ENCODE measurements at regions of chr2 and their contacts with region 1.

Region 1: DNA sequence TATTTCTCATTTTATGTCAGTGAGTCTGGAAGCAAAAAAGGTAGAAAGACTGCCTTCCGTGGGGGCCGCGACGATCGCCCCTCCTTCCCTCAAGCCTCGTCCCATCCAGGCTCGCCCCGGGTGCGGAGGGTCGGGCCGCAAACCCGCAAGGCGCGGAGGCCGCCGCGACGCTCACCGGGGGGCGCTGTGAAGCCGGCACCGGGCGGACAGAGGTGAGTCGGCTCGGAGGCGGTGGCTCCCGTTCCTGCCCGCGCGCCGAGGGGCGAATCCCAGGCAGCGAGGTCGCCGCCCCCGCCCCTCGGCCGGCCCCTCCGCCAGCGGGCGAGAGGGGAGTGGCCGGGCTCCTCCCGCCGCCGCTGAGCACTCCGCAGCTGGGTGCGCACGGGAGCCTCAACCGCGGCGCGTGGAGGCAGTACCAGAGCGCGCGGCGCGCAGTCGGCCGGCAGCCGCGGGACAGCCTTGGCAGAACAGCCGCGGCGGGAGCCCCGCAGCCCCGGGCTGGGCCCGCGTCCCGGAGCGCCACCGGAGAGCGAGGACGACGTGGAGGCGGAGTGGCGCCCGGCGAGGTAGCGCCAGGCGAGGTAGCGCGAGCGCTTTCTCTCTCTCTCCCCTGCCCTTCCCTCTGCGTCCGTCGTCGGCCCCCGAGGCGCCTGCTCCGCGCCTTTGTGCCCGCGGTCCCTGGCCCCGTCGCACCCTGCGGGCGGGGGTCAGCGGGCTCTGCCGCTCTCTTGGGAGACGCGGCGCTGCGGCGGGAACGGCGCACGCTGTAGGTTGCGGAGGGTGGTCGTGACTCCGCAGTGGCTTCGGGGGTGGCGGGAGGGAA is at the start of gene MYO1B:
- DNase-seq: peak; percentile 88
- ATAC-seq: peak; percentile 75
- H3K4me3 ChIP-seq: peak within 1 kb of the TSS; percentile 90
- H3K27ac ChIP-seq: peak within 1 kb of the TSS; percentile 39
- H3K4me1 ChIP-seq: peaks cover 43% of the 10 kb centered on the region
- H3K27me3 ChIP-seq: no peaks in the 10 kb centered on the region
- CTCF ChIP-seq: peak; percentile 70
- total RNA-seq, gene MYO1B: 88.0 and 93.0 TPM in 2 replicates

Region 2: GRCh38 chr2:191171708-191172355 is 73.4 kb before region 1 on chr2:
- CTCF ChIA-PET with region 1: interaction called, 4 read pairs
- POLR2A ChIA-PET with region 1: interaction called, 9 read pairs
- intact Hi-C with region 1: loop called (anchors 1 kb)
- DNase-seq: peak; percentile 97
- ATAC-seq: peak; percentile 70
- H3K4me3 ChIP-seq: peak overlapping the region; percentile 30; the same call in 1 of the 2 replicates
- H3K27ac ChIP-seq: peak overlapping the region; percentile 90
- H3K4me1 ChIP-seq: peaks cover 74% of the 10 kb centered on the region
- H3K27me3 ChIP-seq: no peaks in the 10 kb centered on the region
- CTCF ChIP-seq: no peak

Region 3: GRCh38 chr2:191311628-191312027 is 66.4 kb after region 1 on chr2:
- CTCF ChIA-PET with region 1: no interaction called
- POLR2A ChIA-PET with region 1: no interaction called
- intact Hi-C with region 1: loop called (anchors 5 kb)
- DNase-seq: peak; percentile 86
- ATAC-seq: peak; percentile 93
- H3K4me3 ChIP-seq: no peak overlapping the region
- H3K27ac ChIP-seq: peak overlapping the region; percentile 25
- H3K4me1 ChIP-seq: peaks cover 25% of the 10 kb centered on the region
- H3K27me3 ChIP-seq: no peaks in the 10 kb centered on the region
- CTCF ChIP-seq: no peak

Region 4: GRCh38 chr2:191376981-191377629 is 131.8 kb after region 1 on chr2:
- CTCF ChIA-PET with region 1: no interaction called
- POLR2A ChIA-PET with region 1: no interaction called
- intact Hi-C with region 1: loop called (anchors 5 kb)
- DNase-seq: peak; percentile 87
- ATAC-seq: peak; percentile 100
- H3K4me3 ChIP-seq: no peak overlapping the region
- H3K27ac ChIP-seq: peak overlapping the region; percentile 72
- H3K4me1 ChIP-seq: peaks cover 24% of the 10 kb centered on the region
- H3K27me3 ChIP-seq: no peaks in the 10 kb centered on the region
- CTCF ChIP-seq: no peak

Region 5: DNA sequence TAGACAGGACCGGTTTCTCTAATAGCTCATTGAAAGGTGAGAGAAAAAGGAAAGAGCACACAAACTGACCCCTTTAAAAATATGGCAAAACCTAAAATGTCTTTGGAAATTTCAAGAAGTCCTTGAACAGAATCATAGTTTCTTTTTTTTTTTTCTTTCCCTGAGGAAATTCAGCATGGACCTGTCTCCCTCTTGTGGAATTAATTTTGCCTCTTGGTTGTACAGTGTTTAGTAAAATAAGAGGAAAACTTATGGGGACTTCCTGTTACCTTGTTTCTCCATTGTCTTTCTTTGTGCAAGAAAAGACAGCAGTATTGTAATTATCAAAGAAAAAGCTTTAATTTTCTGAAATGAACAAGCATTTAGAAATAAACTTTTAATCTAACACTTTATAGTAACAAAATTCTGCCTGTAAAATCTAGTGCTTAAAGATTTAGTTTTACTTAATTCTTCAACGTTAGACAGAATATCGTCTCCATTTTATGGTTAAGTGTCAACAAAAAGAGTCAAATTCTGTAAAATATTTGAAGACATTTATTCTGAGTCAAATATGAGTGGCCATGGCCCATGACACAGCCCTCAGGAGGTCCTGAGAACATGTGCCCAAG is 256.4 kb after region 1 on chr2:
- CTCF ChIA-PET with region 1: no interaction called
- POLR2A ChIA-PET with region 1: no interaction called
- intact Hi-C with region 1: loop called (anchors 1 kb)
- DNase-seq: peak; percentile 70
- ATAC-seq: peak; percentile 54
- H3K4me3 ChIP-seq: no peak overlapping the region
- H3K27ac ChIP-seq: no peak overlapping the region
- H3K4me1 ChIP-seq: peaks cover 10% of the 10 kb centered on the region
- H3K27me3 ChIP-seq: no peaks in the 10 kb centered on the region
- CTCF ChIP-seq: peak; percentile 84

Region 6: DNA sequence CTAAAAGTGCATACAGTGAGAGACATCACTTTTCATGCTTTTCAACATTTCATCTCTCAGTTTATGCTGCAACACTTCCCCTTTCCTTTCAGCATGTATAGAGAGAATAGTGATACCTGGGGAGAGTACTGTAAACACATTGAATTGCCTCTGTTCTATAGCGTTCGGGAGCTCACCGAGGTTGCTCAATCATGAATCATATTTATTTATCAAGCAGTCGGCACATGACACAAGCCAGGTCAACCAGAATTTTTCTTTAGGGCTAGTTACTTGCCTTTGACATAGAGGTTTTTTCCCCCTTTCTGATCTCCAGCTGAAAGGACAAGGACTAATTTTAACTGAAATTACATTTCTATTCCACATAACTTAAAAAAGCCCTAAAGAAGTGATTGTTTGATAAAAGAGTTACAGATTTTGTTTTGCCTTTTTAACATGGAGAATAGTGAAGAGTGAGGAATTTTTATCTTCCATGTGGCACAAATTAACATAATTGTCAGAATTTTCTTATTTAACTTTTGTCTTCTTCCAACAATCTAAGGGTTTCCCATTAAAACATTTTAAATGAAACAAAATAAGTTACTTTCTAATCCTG is 1640.4 kb after region 1 on chr2:
- CTCF ChIA-PET with region 1: no interaction called
- POLR2A ChIA-PET with region 1: no interaction called
- intact Hi-C with region 1: no loop called
- DNase-seq: peak; percentile 50
- ATAC-seq: peak; percentile 84
- H3K4me3 ChIP-seq: no peak overlapping the region
- H3K27ac ChIP-seq: no peak overlapping the region
- H3K4me1 ChIP-seq: no peaks in the 10 kb centered on the region
- H3K27me3 ChIP-seq: no peaks in the 10 kb centered on the region
- CTCF ChIP-seq: no peak